Ascending aorta (tissue), 2 donors: ENCODE measurements at regions of chr19 and their contacts with region 1.

Region 1: GRCh38 chr19:12333162-12334159 is at the start of gene ZNF563:
- DNase-seq: peak; percentile 97 to 99
- H3K4me3 ChIP-seq: peak within 1 kb of the TSS; percentile 82 to 94
- H3K27ac ChIP-seq: peak within 1 kb of the TSS; percentile 93 to 95
- H3K4me1 ChIP-seq: peaks cover 0 to 2% of the 10 kb centered on the region in 2 donors
- H3K27me3 ChIP-seq: no peaks in the 10 kb centered on the region
- CTCF ChIP-seq: no peak
- total RNA-seq, gene ZNF563: not detected

Region 2: GRCh38 chr19:12162882-12163806 is 170.3 kb before region 1 on chr19 and contains the start of gene ZNF136:
- intact Hi-C with region 1: loop called (anchors 1 kb)
- DNase-seq: peak; percentile 89 to 96
- H3K4me3 ChIP-seq: peak within 1 kb of the TSS; percentile 83 to 84
- H3K27ac ChIP-seq: peak within 1 kb of the TSS; percentile 90 to 94
- H3K4me1 ChIP-seq: peaks cover 0 to 12% of the 10 kb centered on the region in 2 donors
- H3K27me3 ChIP-seq: no peaks in the 10 kb centered on the region
- CTCF ChIP-seq: no peak
- total RNA-seq, gene ZNF136: 1.9 TPM

Region 3: DNA sequence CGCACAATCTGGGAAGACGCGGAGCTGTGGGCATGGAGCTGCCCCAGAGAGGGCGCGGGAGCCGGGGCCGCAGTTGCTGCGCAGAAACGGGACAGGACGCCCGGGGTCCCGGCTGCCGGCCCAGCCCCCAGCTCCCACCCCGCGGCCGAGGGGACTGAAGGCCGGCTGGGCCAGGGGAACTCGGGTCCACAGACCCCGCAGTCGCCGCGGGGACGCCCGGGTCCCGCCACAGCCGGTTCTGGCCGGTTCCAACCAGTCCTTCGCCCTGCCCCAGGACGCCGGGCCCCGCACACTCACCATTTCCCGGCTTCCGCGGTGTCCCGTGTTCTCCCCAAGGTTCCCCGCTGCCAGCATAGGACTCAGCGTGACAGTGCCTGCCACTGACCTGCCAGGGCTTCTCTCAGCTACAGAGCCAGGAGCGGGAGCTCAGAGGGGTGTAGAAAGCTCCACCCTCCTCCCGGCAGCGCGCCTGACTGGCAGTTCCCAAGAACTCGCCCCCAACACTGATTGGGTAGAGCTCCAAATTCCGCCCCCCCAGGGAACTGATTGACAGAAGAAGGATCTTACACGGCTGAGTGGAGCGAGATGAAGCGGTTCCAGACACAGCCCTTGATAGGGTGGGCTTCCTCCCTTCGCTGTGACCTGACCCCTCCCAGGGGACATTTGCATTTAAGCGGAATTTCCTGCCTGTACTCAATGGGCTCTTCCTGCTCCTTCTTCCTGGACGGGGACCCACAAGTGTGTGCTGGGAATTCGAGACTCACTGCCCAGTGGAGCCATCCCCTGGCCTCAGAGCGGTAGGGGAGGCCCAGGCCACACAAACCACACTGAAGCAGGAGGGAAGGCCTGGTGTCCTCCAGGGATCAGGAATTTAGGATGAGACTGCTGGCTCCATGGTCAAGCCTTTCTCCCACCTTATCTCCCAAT is 32.0 kb after region 1 on chr19 and contains the start of gene ZNF442:
- intact Hi-C with region 1: loop called (anchors 1 kb)
- DNase-seq: peak; percentile 84 to 98
- H3K4me3 ChIP-seq: peak within 1 kb of the TSS; percentile 79 to 91
- H3K27ac ChIP-seq: peak within 1 kb of the TSS; percentile 90 to 94
- H3K4me1 ChIP-seq: peaks cover 0 to 3% of the 10 kb centered on the region in 2 donors
- H3K27me3 ChIP-seq: no peaks in the 10 kb centered on the region
- CTCF ChIP-seq: peak; percentile 63 to 75 (median 65)
- total RNA-seq, gene ZNF442: 0.21 TPM

Region 4: GRCh38 chr19:12440541-12441316 is 107.3 kb after region 1 on chr19 and contains the start of gene ZNF443:
- intact Hi-C with region 1: loop called (anchors 1 kb)
- DNase-seq: peak; percentile 99
- H3K4me3 ChIP-seq: peak within 1 kb of the TSS; percentile 77 to 81
- H3K27ac ChIP-seq: peak within 1 kb of the TSS; percentile 80 to 81
- H3K4me1 ChIP-seq: no peaks in the 10 kb centered on the region
- H3K27me3 ChIP-seq: no peaks in the 10 kb centered on the region
- CTCF ChIP-seq: peak in 1 of 3 experiments; percentile 17
- total RNA-seq, gene ZNF443: 4.0 TPM